Dorsolateral prefrontal cortex (tissue), 120 donors: ENCODE measurements at regions of chr20 and their contacts with region 1.

Region 1: DNA sequence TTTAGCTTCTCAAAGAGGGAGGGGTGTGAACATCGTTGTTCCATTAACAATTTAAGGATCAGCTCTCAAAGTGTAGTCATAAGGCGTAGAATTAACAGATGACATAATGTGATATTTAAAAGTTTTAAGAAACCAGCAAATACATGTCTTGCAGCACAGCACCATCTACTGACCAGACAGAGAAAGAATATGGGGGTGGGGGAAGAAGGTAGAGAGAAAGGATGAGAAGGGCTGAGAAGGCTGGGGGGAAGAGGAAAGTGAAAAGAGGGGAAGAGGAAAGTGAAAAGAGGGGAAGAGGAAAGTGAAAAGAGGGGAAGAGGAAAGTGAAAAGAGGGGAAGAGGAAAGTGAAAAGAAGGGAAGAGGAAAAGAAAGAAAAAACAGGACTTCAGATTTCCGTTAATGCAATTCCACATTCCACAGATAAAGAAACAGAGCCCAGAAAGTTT is 80.9 kb downstream of the HAO1 start:
- DNase-seq: peak in 1 of 10 donors; percentile 17
- H3K4me3 ChIP-seq: no peak overlapping the region
- H3K27ac ChIP-seq: no peak overlapping the region
- H3K27me3 ChIP-seq: peaks cover 0 to 2% (median 0%) of the 10 kb centered on the region in 45 donors
- CTCF ChIP-seq: peak in 55 of 56 donors; percentile 25 to 76 (median 57)

Region 2: DNA sequence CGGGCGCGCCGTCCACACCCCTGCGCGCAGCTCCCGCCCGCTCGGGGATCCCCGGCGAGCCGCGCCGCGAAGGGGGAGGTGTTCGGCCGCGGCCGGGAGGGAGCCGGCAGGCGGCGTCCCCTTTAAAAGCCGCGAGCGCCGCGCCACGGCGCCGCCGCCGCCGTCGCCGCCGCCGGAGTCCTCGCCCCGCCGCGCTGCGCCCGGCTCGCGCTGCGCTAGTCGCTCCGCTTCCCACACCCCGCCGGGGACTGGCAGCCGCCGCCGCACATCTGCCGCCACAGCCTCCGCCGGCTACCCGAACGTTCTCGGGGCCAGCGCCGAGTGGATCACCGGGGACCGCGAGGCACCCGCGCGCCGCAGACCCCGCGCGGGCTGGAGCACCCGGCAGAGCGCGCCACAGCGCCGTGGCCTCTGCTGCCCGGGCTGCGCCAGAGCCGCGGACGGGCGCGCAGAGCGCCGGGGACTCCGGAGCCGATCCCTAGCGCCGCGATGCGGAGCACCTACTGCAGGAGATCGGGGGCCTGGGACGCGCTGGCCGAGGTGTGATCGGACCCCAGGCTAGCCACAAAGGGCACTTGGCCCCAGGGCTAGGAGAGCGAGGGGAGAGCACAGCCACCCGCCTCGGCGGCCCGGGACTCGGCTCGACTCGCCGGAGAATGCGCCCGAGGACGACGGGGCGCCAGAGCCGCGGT is 1091.7 kb before region 1 on chr20 and contains the start of gene BMP2:
- intact Hi-C with region 1: loop called in 1 of 2 experiments (anchors 10 kb)
- DNase-seq: peak in 7 of 10 donors; percentile 40 to 79 (median 46)
- H3K4me3 ChIP-seq: peak within 1 kb of the TSS; percentile 59 to 90 (median 75)
- H3K27ac ChIP-seq: peak within 1 kb of the TSS in 51 of 59 donors; percentile 23 to 88 (median 72)
- H3K27me3 ChIP-seq: peaks cover 0 to 3% (median 0%) of the 10 kb centered on the region in 45 donors
- CTCF ChIP-seq: peak in 16 of 56 donors; percentile 1 to 23 (median 12)
- total RNA-seq, gene BMP2: 1.6 to 8.8 (median 3.1) TPM

Region 3: DNA sequence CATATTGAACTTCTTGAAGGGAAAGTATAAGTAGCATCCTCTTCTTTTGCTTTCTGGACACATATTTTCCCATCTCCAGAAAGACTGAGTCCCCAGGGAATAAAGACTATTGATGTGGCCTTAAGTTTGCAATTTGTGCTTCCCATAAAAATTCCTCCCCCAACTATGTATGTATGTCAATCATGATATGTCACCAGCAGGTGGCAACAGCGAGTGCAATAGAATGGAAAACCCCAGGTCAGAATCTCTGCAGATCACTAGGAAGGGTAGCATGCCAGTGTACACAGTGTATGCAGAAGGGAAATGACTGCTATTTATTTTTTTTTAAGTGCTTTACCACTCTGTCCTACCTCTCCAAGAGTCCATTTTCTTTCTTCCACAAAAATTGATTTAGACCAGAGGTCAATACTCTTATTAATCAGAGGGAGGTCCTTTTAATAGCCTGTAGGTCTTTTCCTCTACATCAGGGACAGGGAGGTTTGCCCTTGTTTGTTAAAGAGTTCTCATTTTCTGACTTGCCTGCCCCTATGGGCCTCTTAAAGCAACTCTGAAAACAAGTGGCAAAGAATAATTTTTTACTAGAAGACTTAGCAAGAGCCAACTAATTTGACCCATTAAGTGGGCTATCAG is 1030.5 kb before region 1 on chr20:
- intact Hi-C with region 1: loop called in 1 of 2 experiments (anchors 10 kb)
- DNase-seq: peak in 8 of 10 donors; percentile 25 to 75 (median 52)
- H3K4me3 ChIP-seq: no peak overlapping the region
- H3K27ac ChIP-seq: no peak overlapping the region
- H3K27me3 ChIP-seq: peaks cover 0 to 6% (median 0%) of the 10 kb centered on the region in 45 donors
- CTCF ChIP-seq: peak; percentile 52 to 87 (median 76)

Region 4: DNA sequence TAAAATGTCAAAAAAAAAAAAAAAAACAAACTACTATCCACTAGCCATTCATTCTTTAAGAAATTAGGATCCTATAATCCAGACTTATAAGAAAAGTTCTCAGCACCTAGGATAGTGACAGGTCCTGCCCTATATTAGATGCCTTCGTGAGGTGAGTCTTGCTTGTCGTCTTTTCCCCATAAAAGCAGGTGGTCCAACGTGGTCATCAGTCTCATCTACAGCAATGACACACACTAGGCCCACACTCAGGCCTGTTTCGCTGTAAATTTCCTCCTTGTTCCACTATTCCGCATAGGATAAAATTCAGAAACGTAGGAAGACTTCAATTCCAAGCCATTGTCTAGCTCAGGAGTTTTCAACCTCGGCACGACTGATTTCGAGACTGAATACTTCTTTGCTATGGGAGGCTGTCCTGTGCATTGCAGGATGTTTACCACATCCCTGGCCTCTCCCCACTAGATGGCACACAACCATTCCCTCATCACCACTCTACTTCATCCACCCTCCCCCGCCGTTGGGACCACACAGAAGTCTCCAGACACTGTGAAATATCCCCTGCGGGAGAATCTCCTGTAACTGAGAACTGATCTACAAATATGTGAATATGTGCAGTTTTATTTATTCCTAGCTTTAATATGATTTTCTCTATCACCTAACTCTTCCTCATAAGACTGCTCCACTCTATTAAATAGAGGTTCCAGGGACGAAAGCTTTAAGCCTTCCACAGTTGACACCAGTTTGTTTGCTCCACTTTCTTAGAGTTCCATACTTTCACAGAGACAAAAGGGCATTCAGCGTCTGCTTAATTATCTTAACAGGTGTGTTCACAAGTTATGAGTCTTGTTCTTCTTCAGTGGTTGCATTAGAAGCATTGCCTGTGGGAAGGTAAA is 745.6 kb before region 1 on chr20:
- intact Hi-C with region 1: loop called (anchors 5 to 10 kb)
- DNase-seq: peak in 5 of 10 donors; percentile 28 to 43 (median 38)
- H3K4me3 ChIP-seq: no peak overlapping the region
- H3K27ac ChIP-seq: no peak overlapping the region
- H3K27me3 ChIP-seq: no peaks in the 10 kb centered on the region
- CTCF ChIP-seq: peak in 53 of 56 donors; percentile 20 to 72 (median 50)

Region 5: GRCh38 chr20:7285918-7286556 is 573.3 kb before region 1 on chr20:
- intact Hi-C with region 1: loop called in 1 of 2 experiments (anchors 10 kb)
- DNase-seq: peak; percentile 31 to 89 (median 73)
- H3K4me3 ChIP-seq: no peak overlapping the region
- H3K27ac ChIP-seq: no peak overlapping the region
- H3K27me3 ChIP-seq: peaks cover 0 to 6% (median 0%) of the 10 kb centered on the region in 45 donors
- CTCF ChIP-seq: peak; percentile 63 to 98 (median 90)

Region 6: GRCh38 chr20:7798176-7798575 is 61.2 kb before region 1 on chr20:
- intact Hi-C with region 1: no loop called
- DNase-seq: no peak
- H3K4me3 ChIP-seq: no peak overlapping the region
- H3K27ac ChIP-seq: no peak overlapping the region
- H3K27me3 ChIP-seq: no peaks in the 10 kb centered on the region
- CTCF ChIP-seq: no peak

Region 7: DNA sequence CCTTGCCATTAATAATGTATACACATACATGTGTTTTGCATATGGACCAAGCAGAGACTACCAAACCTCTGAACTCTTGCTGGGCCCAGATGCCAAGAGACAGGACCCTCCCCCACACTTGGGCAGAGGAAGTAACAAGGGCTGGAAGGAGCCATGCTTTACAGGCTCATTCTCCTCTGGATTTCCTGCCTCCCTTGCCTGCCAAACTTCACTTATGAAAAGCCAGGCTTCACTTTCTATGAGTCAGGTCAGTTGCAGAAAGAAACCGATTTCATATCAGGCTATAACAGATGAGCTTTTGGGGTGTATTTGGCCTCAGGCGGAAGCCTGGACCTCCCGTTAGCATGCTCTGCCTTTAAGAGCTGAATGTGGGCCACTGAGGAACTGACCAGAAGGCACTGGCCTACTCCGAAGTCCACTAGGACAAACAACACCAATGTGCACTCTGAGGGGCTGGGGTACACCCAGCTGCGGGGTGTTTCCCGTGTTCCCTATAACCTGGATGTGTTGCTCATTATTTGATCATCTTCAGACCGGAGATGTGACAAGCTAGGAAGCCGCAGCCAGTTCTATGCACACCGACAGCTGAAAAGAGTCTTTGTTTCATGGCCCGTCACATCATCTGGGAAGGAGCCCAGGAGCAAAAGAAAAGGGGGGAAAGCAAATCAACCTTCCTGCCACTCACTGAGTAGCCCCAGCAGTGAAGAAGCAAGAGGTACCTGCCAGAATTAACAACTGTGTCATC is 52.4 kb after region 1 on chr20:
- intact Hi-C with region 1: no loop called
- DNase-seq: peak in 1 of 10 donors; percentile 29
- H3K4me3 ChIP-seq: peak overlapping the region in 1 of 59 donors; percentile 17
- H3K27ac ChIP-seq: no peak overlapping the region
- H3K27me3 ChIP-seq: peaks cover 0 to 3% (median 0%) of the 10 kb centered on the region in 45 donors
- CTCF ChIP-seq: no peak

Region 8: GRCh38 chr20:7935027-7935551 is 75.7 kb after region 1 on chr20:
- intact Hi-C with region 1: no loop called
- DNase-seq: no peak
- H3K4me3 ChIP-seq: no peak overlapping the region
- H3K27ac ChIP-seq: peak overlapping the region in 8 of 59 donors; percentile 2 to 77 (median 60)
- H3K27me3 ChIP-seq: no peaks in the 10 kb centered on the region
- CTCF ChIP-seq: no peak